Activated CD4-positive, alpha-beta T cell treated with anti-CD3 and anti-CD28 coated beads for 36 hours (primary cell): ENCODE measurements at regions of chrX and their contacts with region 1.

Region 1: DNA sequence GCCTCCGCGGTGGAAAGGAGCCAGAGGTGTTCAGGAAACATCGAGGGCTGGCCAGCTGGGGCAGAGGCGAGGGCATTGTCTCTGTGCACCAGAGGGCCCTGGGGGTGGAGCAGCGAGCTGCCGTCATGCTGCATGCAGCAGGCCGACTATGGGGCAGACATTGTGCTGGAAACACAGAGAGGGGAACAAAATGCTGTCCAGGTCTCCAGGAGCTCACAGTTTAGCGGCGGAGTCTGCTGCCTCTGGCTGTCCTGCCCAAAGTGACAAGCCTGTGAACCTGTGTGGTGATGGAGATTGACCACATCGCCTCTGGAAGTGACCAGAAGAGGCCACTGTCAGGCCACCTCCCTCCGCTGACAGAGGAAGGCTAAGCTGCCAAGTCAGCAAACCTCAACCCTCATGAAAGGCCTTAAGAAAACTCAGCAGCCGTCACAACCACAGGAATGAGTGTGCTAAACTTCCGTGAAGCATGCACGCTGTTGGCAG is 20.1 kb upstream of the SASH3 start:
- DNase-seq: peak; percentile 79
- ATAC-seq: peak; percentile 81
- H3K4me3 Mint-ChIP-seq: peak overlapping the region; percentile 35
- H3K27ac Mint-ChIP-seq: peak overlapping the region; percentile 90
- H3K4me1 Mint-ChIP-seq: peaks cover 55% of the 10 kb centered on the region
- H3K27me3 Mint-ChIP-seq: no peaks in the 10 kb centered on the region

Region 2: DNA sequence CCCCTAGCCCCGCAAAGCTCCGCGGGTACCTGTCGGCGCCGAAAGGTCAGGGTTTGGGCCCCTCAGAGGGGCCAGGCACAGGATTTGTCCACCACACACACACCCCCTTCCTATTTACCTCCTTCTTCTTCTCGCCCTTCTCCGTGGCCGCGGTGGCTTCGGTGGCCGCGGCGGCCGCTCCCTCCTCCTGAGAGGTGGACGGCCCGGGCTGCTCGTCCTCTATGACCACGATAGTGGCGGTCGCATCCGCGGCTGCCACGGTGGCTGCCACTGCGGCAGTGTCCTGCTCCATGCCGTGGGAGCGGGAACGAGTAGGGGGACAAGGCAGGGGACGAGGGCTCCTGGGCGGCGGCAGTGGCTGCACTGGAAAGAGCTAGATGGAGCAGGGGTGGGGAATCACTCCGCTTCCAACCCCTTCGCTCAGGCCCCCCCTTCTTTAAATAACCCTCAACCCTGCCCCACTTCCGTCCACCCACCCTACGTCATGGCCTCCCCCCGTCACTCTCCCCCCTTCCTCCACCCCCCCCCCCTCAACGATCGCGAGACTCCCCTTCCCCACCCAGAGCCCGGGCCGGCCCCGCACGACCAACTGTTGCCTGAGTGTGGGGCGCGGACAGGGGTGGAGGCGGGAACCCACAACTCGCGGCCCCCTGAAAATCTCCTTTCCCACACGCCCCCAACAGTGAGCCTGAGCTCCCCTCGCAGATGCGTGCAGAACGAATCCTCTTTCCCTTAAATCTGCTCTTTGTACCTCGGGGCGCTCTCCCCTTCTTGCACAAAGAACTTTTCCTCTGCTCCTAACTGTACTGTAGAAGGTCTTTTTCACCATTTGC is 236.3 kb before region 1 on chrX and contains the start of gene SMARCA1:
- CTCF ChIA-PET with region 1: no interaction called
- POLR2A ChIA-PET with region 1: no interaction called
- intact Hi-C with region 1: no loop called
- DNase-seq: peak; percentile 6
- ATAC-seq: no peak
- H3K4me3 Mint-ChIP-seq: peak within 1 kb of the TSS; percentile 69
- H3K27ac Mint-ChIP-seq: no peak within 1 kb of the TSS
- H3K4me1 Mint-ChIP-seq: no peaks in the 10 kb centered on the region
- H3K27me3 Mint-ChIP-seq: peaks cover 10% of the 10 kb centered on the region
- total RNA-seq, gene SMARCA1: 0.21 to 0.23 TPM

Region 3: DNA sequence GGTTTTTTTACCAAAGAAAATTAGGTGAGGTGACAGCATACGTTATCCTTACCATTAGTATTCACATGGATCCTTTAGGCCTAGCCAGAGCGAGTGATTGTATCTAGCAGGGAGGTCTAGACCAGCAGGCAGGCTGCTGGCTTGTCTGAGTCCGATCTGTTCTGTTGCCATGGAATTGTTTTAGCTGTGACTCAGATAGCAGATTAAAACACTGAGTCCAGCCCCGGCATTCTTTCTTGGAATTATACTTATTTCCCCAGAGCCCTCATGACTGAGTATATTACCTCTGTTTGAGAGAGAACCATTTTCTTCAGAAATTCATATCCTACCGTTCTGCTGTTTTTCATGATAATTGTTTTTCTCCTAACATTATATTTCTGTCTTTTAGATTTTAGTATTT is 182.1 kb before region 1 on chrX:
- CTCF ChIA-PET with region 1: no interaction called
- POLR2A ChIA-PET with region 1: no interaction called
- intact Hi-C with region 1: no loop called
- DNase-seq: no peak
- ATAC-seq: no peak
- H3K4me3 Mint-ChIP-seq: no peak overlapping the region
- H3K27ac Mint-ChIP-seq: no peak overlapping the region
- H3K4me1 Mint-ChIP-seq: no peaks in the 10 kb centered on the region
- H3K27me3 Mint-ChIP-seq: no peaks in the 10 kb centered on the region

Region 4: DNA sequence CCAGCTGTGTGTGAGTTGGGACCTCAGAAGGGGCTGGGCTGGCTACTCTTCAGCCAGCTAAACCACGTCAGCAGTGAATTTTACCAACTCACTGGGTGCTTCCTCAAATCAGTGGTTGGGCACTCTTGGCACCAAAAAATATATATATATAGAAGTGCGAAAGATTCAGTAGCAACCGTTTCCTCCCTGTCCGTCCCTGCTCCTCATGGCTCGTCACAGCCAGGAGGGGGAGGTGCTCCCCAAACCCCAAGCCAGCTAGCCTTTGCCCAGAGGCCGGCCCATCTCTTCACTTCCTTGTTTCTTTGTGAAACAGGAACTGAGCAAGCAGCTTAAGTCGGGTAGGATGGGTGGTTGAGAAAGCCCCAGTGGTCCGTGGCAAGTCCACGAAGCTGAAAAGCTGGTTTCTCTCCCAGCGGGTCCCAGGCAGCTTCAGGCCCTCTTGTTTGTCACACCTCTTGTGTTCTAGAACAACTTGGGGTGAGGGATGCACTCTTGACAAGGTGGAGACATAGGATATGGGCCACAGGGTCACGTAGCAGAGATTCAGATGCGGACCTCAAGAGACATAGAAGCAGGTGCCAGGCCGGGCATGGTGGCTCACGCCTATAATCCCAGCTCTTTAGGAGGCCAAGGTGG is 13.3 kb after region 1 on chrX:
- CTCF ChIA-PET with region 1: interaction called, 20 read pairs
- POLR2A ChIA-PET with region 1: interaction called, 4 read pairs
- intact Hi-C with region 1: loop called in 1 of 2 experiments (anchors 1 kb)
- DNase-seq: peak; percentile 71
- ATAC-seq: peak; percentile 25
- H3K4me3 Mint-ChIP-seq: peak overlapping the region; percentile 41
- H3K27ac Mint-ChIP-seq: peak overlapping the region; percentile 86
- H3K4me1 Mint-ChIP-seq: peaks cover 74% of the 10 kb centered on the region
- H3K27me3 Mint-ChIP-seq: no peaks in the 10 kb centered on the region

Region 5: DNA sequence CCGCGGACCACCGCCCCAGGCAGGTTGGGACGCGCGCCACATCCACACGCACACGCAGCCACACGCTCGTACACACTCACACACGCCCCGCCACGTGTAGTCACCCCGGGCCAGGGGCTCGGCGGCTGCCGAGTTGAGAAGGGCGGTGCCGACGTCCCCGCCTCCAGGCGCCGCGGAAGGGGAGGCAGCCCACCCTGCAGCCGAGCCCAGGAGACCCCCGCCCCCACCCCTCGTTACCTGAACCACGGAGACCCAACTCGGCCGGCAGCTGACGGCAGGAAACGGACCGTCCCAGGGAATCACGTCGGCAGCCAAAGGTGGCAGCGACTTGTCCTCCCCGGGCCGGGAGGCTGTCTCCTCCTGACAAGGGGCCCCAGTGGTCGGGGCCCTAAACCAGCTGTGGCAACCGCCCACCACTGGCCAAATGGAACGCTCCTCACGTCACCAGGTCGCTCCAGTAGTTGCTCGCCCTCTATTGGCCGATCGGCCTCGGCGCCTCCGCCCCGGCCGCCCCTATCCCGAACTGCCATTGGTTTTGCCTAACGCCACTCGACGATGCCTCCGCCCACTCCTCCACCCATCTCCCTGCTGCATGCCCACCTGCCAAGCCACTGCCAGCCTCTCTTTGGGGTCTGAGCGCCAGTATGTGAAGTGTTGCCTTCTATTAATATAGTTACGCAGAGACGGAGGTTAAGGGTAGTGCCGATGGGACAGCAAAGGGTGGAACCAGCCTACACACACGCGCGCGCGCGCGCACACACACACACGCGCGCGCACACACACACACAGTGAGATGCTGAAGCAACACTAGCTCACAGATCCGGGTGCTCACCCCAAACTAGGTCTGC is 84.1 kb after region 1 on chrX and contains the start of gene ZDHHC9:
- CTCF ChIA-PET with region 1: no interaction called
- POLR2A ChIA-PET with region 1: no interaction called
- intact Hi-C with region 1: loop called in 1 of 2 experiments (anchors 5 kb)
- DNase-seq: peak; percentile 92
- ATAC-seq: peak; percentile 97
- H3K4me3 Mint-ChIP-seq: peak within 1 kb of the TSS; percentile 77
- H3K27ac Mint-ChIP-seq: peak within 1 kb of the TSS; percentile 75
- H3K4me1 Mint-ChIP-seq: peaks cover 32% of the 10 kb centered on the region
- H3K27me3 Mint-ChIP-seq: no peaks in the 10 kb centered on the region
- total RNA-seq, gene ZDHHC9: 12.5 to 14.2 TPM

Region 6: GRCh38 chrX:129982274-129983251 is 222.9 kb after region 1 on chrX and contains the start of gene BCORL1:
- CTCF ChIA-PET with region 1: no interaction called
- POLR2A ChIA-PET with region 1: no interaction called
- intact Hi-C with region 1: no loop called
- DNase-seq: peak; percentile 93
- ATAC-seq: peak; percentile 94
- H3K4me3 Mint-ChIP-seq: no peak within 1 kb of the TSS
- H3K27ac Mint-ChIP-seq: peak within 1 kb of the TSS; percentile 51
- H3K4me1 Mint-ChIP-seq: peaks cover 11% of the 10 kb centered on the region
- H3K27me3 Mint-ChIP-seq: no peaks in the 10 kb centered on the region
- total RNA-seq, gene BCORL1: 8.3 to 8.5 TPM

Region 7: DNA sequence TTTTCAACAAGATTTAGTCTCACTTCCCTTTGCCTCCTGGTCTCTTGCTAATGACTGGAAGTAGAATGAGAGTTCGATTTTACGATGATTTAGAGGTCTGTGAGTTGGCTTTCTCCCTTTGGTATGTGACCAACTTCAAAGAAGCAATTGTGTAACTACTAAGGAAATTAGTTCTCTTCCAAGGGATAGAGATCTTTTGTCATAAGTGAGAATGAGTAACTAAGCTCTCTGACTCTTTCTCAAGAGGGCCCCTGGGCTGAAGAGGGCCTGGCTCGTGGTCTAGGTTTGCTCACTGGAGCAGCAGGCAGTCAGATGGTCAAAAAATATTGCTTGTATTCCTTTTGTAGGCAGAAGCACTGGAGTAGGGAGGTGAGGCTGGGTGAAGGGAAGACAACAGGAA is 967.0 kb after region 1 on chrX:
- CTCF ChIA-PET with region 1: no interaction called
- POLR2A ChIA-PET with region 1: no interaction called
- intact Hi-C with region 1: no loop called
- DNase-seq: no peak
- ATAC-seq: no peak
- H3K4me3 Mint-ChIP-seq: no peak overlapping the region
- H3K27ac Mint-ChIP-seq: no peak overlapping the region
- H3K4me1 Mint-ChIP-seq: no peaks in the 10 kb centered on the region
- H3K27me3 Mint-ChIP-seq: no peaks in the 10 kb centered on the region